ENCODE measurements at regions of chr18 and their contacts with region 1.

Region 1: GRCh38 chr18:49486953-49487710 is at the start of gene C18orf32:
- DNase-seq: peak; percentile 96
- ATAC-seq: peak; percentile 92
- H3K4me3 Mint-ChIP-seq: peak within 1 kb of the TSS; percentile 94
- H3K27ac Mint-ChIP-seq: peak within 1 kb of the TSS; percentile 96
- H3K4me1 Mint-ChIP-seq: peaks cover 43% of the 10 kb centered on the region
- H3K27me3 Mint-ChIP-seq: no peaks in the 10 kb centered on the region
- total RNA-seq, gene C18orf32: 26.9 to 29.1 TPM

Region 2: GRCh38 chr18:49459404-49460171 is 27.5 kb before region 1 on chr18:
- POLR2A ChIA-PET with region 1: interaction called, 23 read pairs
- DNase-seq: no peak
- ATAC-seq: peak; percentile 35
- H3K4me3 Mint-ChIP-seq: peak overlapping the region; percentile 87
- H3K27ac Mint-ChIP-seq: peak overlapping the region; percentile 78
- H3K4me1 Mint-ChIP-seq: peaks cover 28% of the 10 kb centered on the region
- H3K27me3 Mint-ChIP-seq: no peaks in the 10 kb centered on the region

Region 3: GRCh38 chr18:49476664-49477411 is 10.3 kb before region 1 on chr18:
- POLR2A ChIA-PET with region 1: interaction called, 12 read pairs
- DNase-seq: no peak
- ATAC-seq: no peak
- H3K4me3 Mint-ChIP-seq: no peak overlapping the region
- H3K27ac Mint-ChIP-seq: peak overlapping the region; percentile 17
- H3K4me1 Mint-ChIP-seq: peaks cover 9% of the 10 kb centered on the region
- H3K27me3 Mint-ChIP-seq: no peaks in the 10 kb centered on the region

Region 4: DNA sequence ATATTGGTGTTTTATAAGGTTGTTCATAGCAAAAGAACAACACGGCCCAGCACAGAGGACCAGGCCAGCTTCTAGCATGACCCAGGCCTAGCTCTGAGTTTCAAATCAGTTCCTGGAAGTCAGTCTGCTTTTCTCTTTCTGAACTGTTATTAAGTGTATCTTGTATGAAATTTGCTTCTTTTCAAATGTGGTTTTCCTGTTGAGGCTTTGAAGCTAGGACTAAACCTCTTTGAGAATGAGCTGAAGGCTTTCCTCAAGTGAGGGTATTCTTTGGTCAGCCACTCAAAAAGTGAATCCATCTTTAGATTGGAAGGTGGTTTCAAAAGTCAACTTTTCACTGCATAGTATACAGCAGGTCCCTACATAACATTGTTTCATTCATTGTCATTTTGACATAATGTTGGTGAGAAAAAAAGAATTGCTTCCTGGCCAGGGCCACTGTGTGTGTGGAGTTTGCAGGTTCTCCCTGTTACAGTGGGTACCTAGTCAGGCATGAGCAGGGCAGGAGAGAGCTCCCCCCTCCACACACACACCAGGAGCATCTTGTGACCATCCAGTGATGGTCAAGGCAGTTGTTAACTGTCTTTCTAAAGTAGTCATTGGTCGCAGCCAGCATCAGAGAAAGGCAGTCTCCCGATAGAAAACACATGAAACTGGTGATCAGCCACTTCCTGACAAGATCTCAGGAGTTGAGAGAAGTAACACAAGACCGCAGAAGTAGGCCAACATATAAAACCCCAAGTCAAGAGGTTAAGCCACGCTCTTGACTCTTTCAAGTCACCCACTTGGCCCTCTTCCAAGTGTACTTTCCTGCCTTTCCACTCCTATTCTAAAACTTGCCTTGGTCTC is 332.9 kb after region 1 on chr18:
- POLR2A ChIA-PET with region 1: interaction called, 12 read pairs
- DNase-seq: peak; percentile 58
- ATAC-seq: peak; percentile 79
- H3K4me3 Mint-ChIP-seq: peak overlapping the region; percentile 71
- H3K27ac Mint-ChIP-seq: peak overlapping the region; percentile 97
- H3K4me1 Mint-ChIP-seq: peaks cover 61% of the 10 kb centered on the region
- H3K27me3 Mint-ChIP-seq: no peaks in the 10 kb centered on the region